ENCODE measurements at regions of chr11 and their contacts with region 1.

Region 1: GRCh38 chr11:36292311-36292722 is 3.1 kb upstream of the COMMD9 start:
- DNase-seq: peak; percentile 33 to 64 (median 46)
- ATAC-seq: no peak
- H3K4me3 ChIP-seq: no peak overlapping the region
- H3K27ac ChIP-seq: no peak overlapping the region
- H3K4me1 ChIP-seq: peaks cover 0 to 2% of the 10 kb centered on the region in 2 experiments; a peak in 1 of 5 replicates
- H3K27me3 ChIP-seq: peaks cover 0 to 5% of the 10 kb centered on the region in 2 experiments; a peak in 4 of 5 replicates
- CTCF ChIP-seq: peak; percentile 46 to 71 (median 62); a peak in 5 of 6 replicates
- EP300 ChIP-seq: no peak
- POLR2A ChIP-seq: no peak
- RAD21 ChIP-seq: peak; percentile 84 to 91

Region 2: DNA sequence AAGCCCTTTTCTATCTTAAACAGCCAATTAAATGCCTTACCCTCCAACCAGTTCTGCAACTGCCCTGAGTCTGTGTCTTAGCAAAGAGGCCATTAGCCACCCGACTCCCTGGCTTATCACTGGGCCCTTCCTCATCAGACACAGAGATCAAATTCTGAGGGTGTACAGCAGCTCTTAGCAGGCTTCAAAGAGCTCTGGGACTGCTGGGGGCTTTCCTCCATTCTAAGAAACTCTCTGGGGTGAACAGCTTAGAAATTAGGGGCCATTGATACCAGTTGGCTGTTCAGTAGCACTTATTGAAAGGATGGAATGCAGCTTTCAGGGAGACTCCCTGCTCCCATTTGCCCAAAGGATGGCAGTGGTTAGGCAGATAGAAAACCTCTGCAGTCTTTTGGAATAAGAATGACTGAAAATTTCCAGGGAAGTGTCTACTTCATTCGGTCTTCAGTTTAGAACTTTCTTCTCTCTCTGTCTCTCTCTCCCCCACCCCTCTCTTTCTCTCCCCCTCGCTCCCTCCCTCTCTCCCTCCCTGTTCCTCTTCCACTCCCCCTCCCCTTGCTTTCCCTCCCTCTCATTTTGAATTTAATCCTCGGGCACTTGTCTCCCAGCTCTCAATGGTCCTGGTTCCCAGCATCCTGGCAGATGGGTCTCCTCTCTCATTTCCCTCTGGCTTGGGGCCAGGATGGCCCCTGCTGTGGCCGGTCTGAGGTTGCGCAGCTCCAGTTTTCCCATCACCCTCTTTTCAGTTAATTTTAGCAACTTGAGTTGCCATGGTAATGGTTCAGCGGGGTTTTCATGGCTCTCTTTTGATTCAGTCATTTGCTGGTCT is 79.5 kb before region 1 on chr11:
- CTCF ChIA-PET with region 1: no interaction called
- POLR2A ChIA-PET with region 1: no interaction called
- in situ Hi-C with region 1: no loop called
- intact Hi-C with region 1: no loop called
- DNase-seq: no peak
- ATAC-seq: no peak
- H3K4me3 ChIP-seq: no peak overlapping the region
- H3K27ac ChIP-seq: no peak overlapping the region
- H3K4me1 ChIP-seq: no peaks in the 10 kb centered on the region
- H3K27me3 ChIP-seq: peaks cover 3 to 27% of the 10 kb centered on the region in 2 experiments
- CTCF ChIP-seq: no peak
- EP300 ChIP-seq: no peak
- POLR2A ChIP-seq: no peak
- RAD21 ChIP-seq: no peak

Region 3: GRCh38 chr11:36478700-36479329 is 186.5 kb after region 1 on chr11:
- CTCF ChIA-PET with region 1: interaction called, 6 read pairs
- POLR2A ChIA-PET with region 1: no interaction called
- in situ Hi-C with region 1: no loop called
- intact Hi-C with region 1: loop called (anchors 1 kb)
- DNase-seq: peak in 1 of 4 experiments; percentile 52
- ATAC-seq: peak; percentile 78
- H3K4me3 ChIP-seq: no peak overlapping the region
- H3K27ac ChIP-seq: no peak overlapping the region
- H3K4me1 ChIP-seq: no peaks in the 10 kb centered on the region
- H3K27me3 ChIP-seq: no peaks in the 10 kb centered on the region
- CTCF ChIP-seq: peak; percentile 52 to 76 (median 55)
- EP300 ChIP-seq: no peak
- POLR2A ChIP-seq: no peak
- RAD21 ChIP-seq: peak; percentile 87 to 88

Region 4: GRCh38 chr11:36492724-36493304 is 200.5 kb after region 1 on chr11:
- CTCF ChIA-PET with region 1: interaction called, 6 read pairs
- POLR2A ChIA-PET with region 1: no interaction called
- in situ Hi-C with region 1: no loop called
- intact Hi-C with region 1: loop called (anchors 1 kb)
- DNase-seq: peak; percentile 45 to 71 (median 52)
- ATAC-seq: peak; percentile 83
- H3K4me3 ChIP-seq: no peak overlapping the region
- H3K27ac ChIP-seq: no peak overlapping the region
- H3K4me1 ChIP-seq: no peaks in the 10 kb centered on the region
- H3K27me3 ChIP-seq: no peaks in the 10 kb centered on the region
- CTCF ChIP-seq: peak; percentile 52 to 81 (median 71); a peak in 5 of 6 replicates
- EP300 ChIP-seq: no peak
- POLR2A ChIP-seq: no peak
- RAD21 ChIP-seq: peak; percentile 64 to 81

Region 5: DNA sequence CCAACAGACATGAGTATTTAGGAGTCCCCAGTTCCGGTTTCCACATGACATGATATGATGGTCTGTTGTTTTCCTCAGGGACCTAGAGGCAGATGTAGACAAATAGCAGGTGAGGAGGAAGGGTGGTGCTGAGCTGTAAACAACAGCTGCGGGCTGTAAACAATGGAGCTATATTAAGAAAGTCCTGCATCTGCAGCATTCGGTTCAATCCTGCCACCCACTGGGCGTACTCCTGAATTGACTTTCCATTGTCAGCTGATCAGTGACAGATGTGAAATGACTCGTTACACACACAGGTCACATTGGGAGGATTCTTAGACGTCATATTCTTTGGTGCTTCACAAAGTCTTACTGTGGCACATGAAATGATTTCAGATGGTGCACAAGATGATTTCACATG is 248.7 kb after region 1 on chr11:
- CTCF ChIA-PET with region 1: no interaction called
- POLR2A ChIA-PET with region 1: no interaction called
- in situ Hi-C with region 1: no loop called
- intact Hi-C with region 1: loop called (anchors 5 kb)
- DNase-seq: peak in 3 of 4 experiments; percentile 16 to 60 (median 25)
- ATAC-seq: peak; percentile 91
- H3K4me3 ChIP-seq: no peak overlapping the region
- H3K27ac ChIP-seq: no peak overlapping the region
- H3K4me1 ChIP-seq: no peaks in the 10 kb centered on the region
- H3K27me3 ChIP-seq: peaks cover 0 to 6% of the 10 kb centered on the region in 2 experiments; a peak in 2 of 5 replicates
- CTCF ChIP-seq: peak; percentile 55 to 72 (median 62)
- EP300 ChIP-seq: no peak
- POLR2A ChIP-seq: no peak
- RAD21 ChIP-seq: peak; percentile 66 to 75

Region 6: DNA sequence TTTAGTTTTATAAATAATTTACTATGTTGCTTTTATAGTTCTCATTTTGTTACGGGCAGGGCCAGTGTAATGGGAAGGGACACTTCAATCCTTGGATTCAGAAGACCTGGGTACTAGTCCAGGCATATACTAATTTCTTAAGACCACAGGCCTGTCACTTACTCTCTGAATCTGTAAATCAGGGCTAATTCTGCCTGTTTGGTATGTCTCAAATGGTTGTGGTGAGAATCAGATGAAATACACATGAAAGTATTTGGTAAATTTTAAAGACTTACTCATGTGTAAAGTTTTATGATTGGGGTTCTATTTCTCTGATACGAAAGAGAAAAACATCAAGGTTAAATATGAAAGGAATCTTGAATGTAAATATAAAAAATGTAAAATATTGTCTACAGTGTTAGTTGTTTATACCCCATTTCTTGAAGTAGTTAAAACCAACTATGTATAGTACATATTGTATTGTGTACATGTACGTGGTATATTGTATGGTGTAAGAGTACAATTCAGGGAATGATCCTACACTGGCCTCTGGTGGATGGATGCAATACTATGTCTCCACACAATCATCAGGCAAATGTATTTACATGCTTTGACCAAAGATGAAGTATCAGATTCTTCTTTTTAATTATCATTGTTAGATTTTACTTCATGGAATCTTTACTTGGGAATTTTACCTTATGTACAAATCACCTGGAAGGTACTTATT is 330.3 kb after region 1 on chr11:
- CTCF ChIA-PET with region 1: no interaction called
- POLR2A ChIA-PET with region 1: no interaction called
- in situ Hi-C with region 1: no loop called
- intact Hi-C with region 1: loop called (anchors 5 kb)
- DNase-seq: peak; percentile 7 to 35 (median 16)
- ATAC-seq: peak; percentile 92
- H3K4me3 ChIP-seq: no peak overlapping the region
- H3K27ac ChIP-seq: no peak overlapping the region
- H3K4me1 ChIP-seq: peaks cover 0 to 17% of the 10 kb centered on the region in 2 experiments; a peak in 2 of 5 replicates
- H3K27me3 ChIP-seq: no peaks in the 10 kb centered on the region
- CTCF ChIP-seq: peak; percentile 37 to 88 (median 62); a peak in 5 of 6 replicates
- EP300 ChIP-seq: no peak
- POLR2A ChIP-seq: no peak
- RAD21 ChIP-seq: peak; percentile 94 to 97

Measured in K562 (cell line).